Mammary epithelial cell (primary cell): ENCODE measurements at regions of chr17 and their contacts with region 1.

Region 1: DNA sequence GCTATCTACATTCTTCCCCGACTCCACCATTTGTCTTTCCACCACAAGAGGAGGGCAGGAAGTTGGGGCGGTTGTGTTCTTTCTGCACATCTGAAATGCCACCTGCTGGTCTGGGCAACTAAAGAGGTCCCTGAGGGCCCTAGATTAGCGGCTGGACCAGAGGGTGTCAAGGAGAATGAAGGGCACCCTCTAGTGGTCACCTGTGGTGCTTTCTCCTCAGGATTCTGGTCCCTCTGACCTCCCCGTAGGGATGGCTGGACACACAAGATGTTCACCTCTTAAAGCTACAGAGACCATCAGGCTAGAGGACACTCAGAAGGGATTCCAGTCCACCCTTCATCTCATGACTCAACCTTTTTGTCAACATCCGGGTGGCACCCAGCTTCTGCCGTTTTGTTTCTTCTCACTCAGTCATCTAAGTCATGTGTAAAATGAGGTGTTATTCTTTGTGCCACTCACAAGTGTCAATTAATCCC is 2.9 kb upstream of the SCIMP start:
- DNase-seq: peak; percentile 40
- H3K4me3 ChIP-seq: no peak overlapping the region
- H3K27ac ChIP-seq: no peak overlapping the region
- H3K4me1 ChIP-seq: peaks cover 8% of the 10 kb centered on the region
- H3K27me3 ChIP-seq: no peaks in the 10 kb centered on the region
- CTCF ChIP-seq: peak; percentile 52 to 63

Region 2: DNA sequence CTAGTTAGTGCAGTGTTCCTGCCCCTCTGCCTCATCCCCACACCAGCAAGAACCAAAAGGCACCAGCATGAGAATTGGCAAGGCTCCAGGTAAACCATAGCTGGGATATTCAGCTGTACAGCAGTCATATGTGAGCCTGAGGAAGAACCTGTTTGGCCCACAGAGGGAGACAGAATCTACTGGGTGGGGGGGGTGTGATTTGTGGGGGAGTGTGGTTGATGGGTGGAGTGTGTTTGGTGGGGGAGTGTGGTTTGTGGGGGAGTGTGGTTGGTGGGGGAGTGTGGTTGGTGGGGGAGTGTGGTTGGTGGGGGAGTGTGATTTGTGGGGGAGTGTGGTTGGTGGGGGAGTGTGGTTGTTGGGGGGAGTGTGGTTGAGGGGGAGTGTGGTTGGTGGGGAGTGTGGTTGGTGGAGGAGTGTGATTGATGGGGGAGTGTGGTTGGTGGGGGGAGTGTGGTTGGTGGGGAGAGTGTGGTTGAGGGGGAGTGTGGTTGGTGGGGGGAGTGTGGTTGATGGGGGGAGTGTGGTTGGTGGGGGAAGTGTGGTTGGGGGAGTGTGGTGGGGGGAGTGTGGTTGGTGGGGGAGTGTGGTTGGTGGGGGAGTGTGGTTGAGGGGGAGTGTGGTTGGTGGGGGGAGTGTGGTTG is 384.9 kb before region 1 on chr17:
- CTCF ChIA-PET with region 1: interaction called, 10 read pairs
- dilution Hi-C with region 1: no loop called
- in situ Hi-C with region 1: no loop called
- intact Hi-C with region 1: no loop called
- DNase-seq: peak; percentile 59
- H3K4me3 ChIP-seq: no peak overlapping the region
- H3K27ac ChIP-seq: peak overlapping the region; percentile 8
- H3K4me1 ChIP-seq: peaks cover 76% of the 10 kb centered on the region
- H3K27me3 ChIP-seq: no peaks in the 10 kb centered on the region
- CTCF ChIP-seq: peak in 1 of 2 donors; percentile 30